Ascending aorta (tissue), 2 donors: ENCODE measurements at regions of chr5 and their contacts with region 1.

Region 1: DNA sequence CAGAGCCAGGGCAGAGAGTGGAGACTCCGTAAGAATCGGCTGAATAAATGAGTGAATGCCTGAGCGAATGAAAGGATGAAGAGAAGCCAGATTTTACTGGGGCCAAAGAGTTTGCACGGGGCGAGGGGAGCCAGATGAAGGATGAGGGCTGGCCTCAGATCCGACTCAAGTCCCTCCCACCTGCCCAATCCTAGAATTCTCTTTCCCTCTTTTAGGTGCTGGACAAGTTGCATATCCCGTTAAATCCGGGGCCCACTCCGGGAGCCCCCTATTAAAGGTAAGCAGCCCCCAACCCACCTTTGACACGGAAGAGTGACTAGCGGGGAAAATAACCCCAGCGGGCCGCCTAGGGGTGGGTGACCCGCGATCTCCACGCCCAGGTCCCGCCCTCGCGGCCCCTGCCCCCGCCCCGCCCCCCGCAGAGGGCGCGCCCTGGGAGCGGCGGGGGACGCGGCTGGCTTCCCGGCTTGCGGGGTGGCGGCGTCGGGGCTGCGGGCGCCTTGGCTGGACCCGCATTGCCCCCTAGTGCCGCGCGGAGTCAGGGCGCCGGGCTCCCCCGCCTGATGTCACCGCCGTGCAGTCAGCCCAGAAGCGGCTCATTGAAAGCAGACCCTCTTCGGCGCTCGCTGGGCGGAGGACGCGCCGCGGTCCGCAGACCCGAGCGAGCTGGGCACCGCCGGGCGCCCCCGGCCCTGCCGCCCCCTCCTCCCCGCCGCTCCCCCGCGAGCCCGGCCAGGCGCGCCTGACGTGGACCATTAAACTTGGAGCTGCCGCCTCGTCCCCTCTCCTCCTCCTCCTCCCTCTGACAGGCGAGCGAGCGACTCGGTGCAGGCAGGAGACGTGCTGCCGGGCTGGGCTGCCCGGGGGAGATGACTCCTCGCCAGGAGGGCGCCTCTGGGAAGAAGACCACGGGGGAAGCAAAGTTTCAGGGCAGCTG is at the start of gene ADRA1B:
- DNase-seq: peak in 1 of 2 donors; percentile 89
- H3K4me3 ChIP-seq: peak within 1 kb of the TSS; percentile 59 to 84
- H3K27ac ChIP-seq: peak within 1 kb of the TSS; percentile 93 to 94
- H3K4me1 ChIP-seq: peaks cover 27 to 41% of the 10 kb centered on the region in 2 donors
- H3K27me3 ChIP-seq: no peaks in the 10 kb centered on the region
- CTCF ChIP-seq: peak; percentile 61 to 89 (median 65)
- total RNA-seq, gene ADRA1B: 20.6 TPM

Region 2: DNA sequence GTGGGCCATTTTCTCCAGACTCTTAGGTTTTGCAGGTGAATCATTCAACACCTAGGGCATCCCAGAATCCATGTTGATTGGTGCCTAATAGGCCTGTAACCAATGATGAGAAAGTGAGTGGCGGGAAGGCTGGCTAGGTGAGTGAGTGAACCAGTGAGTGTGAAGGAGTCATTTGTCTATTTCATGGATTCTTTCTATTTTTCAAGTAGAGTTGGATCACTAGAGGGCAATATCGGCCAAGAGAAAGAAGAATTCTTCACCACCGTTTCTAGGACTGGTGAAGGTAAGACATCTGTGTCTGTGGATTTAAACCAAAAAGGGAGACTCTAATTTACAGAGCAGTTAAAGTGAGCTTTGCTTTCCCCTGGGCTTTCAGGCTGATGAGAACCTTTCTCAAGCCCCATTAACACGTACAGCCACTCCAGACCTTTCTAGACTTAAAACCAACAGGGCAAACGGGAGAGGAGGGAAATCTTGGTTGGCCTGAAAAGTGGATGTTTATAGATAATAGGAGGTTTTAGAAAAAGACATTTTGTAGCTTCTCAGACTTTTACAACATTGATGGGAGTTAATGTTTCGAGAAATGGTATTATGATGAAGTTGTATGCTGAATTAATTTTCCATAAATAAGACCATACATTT is 471.6 kb before region 1 on chr5:
- intact Hi-C with region 1: loop called (anchors 1 kb)
- DNase-seq: no peak
- H3K4me3 ChIP-seq: no peak overlapping the region
- H3K27ac ChIP-seq: no peak overlapping the region
- H3K4me1 ChIP-seq: no peaks in the 10 kb centered on the region
- H3K27me3 ChIP-seq: no peaks in the 10 kb centered on the region
- CTCF ChIP-seq: peak; percentile 41 to 60 (median 52)

Region 3: GRCh38 chr5:159581502-159582249 is 334.5 kb before region 1 on chr5:
- intact Hi-C with region 1: loop called (anchors 10 kb)
- DNase-seq: peak in 1 of 2 donors; percentile 72
- H3K4me3 ChIP-seq: no peak overlapping the region
- H3K27ac ChIP-seq: no peak overlapping the region
- H3K4me1 ChIP-seq: no peaks in the 10 kb centered on the region
- H3K27me3 ChIP-seq: no peaks in the 10 kb centered on the region
- CTCF ChIP-seq: no peak

Region 4: GRCh38 chr5:159752622-159753275 is 163.4 kb before region 1 on chr5:
- intact Hi-C with region 1: loop called (anchors 1 kb)
- DNase-seq: peak in 1 of 2 donors; percentile 85
- H3K4me3 ChIP-seq: no peak overlapping the region
- H3K27ac ChIP-seq: peak overlapping the region; percentile 90
- H3K4me1 ChIP-seq: peaks cover 0 to 50% of the 10 kb centered on the region in 2 donors
- H3K27me3 ChIP-seq: no peaks in the 10 kb centered on the region
- CTCF ChIP-seq: no peak

Region 5: GRCh38 chr5:159764283-159765134 is 151.7 kb before region 1 on chr5:
- intact Hi-C with region 1: no loop called
- DNase-seq: peak in 1 of 2 donors; percentile 88
- H3K4me3 ChIP-seq: no peak overlapping the region
- H3K27ac ChIP-seq: peak overlapping the region; percentile 48 to 60
- H3K4me1 ChIP-seq: peaks cover 3 to 16% of the 10 kb centered on the region in 2 donors
- H3K27me3 ChIP-seq: no peaks in the 10 kb centered on the region
- CTCF ChIP-seq: no peak

Region 6: GRCh38 chr5:159781626-159782157 is 134.5 kb before region 1 on chr5:
- intact Hi-C with region 1: loop called (anchors 1 kb)
- DNase-seq: no peak
- H3K4me3 ChIP-seq: no peak overlapping the region
- H3K27ac ChIP-seq: peak overlapping the region; percentile 94 to 95
- H3K4me1 ChIP-seq: peaks cover 10 to 72% of the 10 kb centered on the region in 2 donors
- H3K27me3 ChIP-seq: no peaks in the 10 kb centered on the region
- CTCF ChIP-seq: no peak

Region 7: DNA sequence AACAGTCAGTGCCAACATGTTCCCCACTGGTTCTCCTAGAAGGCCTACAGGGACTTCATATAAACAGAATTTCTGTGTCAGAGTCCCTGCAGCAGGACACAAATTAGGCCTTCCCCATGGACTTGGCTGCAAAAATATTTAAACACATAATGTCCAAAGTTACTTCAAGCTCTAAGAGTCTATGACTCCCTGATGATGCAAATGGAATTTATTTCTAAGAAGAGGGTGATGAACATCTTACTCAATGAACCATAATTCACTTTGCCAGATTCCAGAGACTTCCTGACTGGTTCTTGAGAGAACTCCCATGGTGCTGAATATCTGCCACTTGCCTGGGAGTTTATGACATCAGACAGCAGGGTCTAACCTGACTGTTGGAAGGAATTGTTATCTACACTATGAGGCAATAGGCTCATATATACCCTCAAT is 32.6 kb before region 1 on chr5:
- intact Hi-C with region 1: loop called (anchors 1 kb)
- DNase-seq: peak in 1 of 2 donors; percentile 81
- H3K4me3 ChIP-seq: no peak overlapping the region
- H3K27ac ChIP-seq: peak overlapping the region; percentile 89 to 92
- H3K4me1 ChIP-seq: peaks cover 11 to 32% of the 10 kb centered on the region in 2 donors
- H3K27me3 ChIP-seq: no peaks in the 10 kb centered on the region
- CTCF ChIP-seq: no peak

Region 8: GRCh38 chr5:159951387-159951786 is 35.2 kb after region 1 on chr5:
- intact Hi-C with region 1: no loop called
- DNase-seq: no peak
- H3K4me3 ChIP-seq: no peak overlapping the region
- H3K27ac ChIP-seq: no peak overlapping the region
- H3K4me1 ChIP-seq: no peaks in the 10 kb centered on the region
- H3K27me3 ChIP-seq: no peaks in the 10 kb centered on the region
- CTCF ChIP-seq: no peak